HepG2 (cell line): ENCODE measurements at regions of chr6 and their contacts with region 1.

Region 1: GRCh38 chr6:18823782-18824386 is 436.7 kb downstream of the RNF144B start:
- DNase-seq: peak; percentile 33
- ATAC-seq: no peak
- H3K4me3 ChIP-seq: no peak overlapping the region
- H3K27ac ChIP-seq: no peak overlapping the region
- H3K4me1 ChIP-seq: no peaks in the 10 kb centered on the region
- H3K27me3 ChIP-seq: no peaks in the 10 kb centered on the region
- CTCF ChIP-seq: peak; percentile 62
- EP300 ChIP-seq: no peak
- POLR2A ChIP-seq: no peak
- RAD21 ChIP-seq: no peak

Region 2: GRCh38 chr6:18527836-18528743 is 295.8 kb before region 1 on chr6:
- CTCF ChIA-PET with region 1: no interaction called
- POLR2A ChIA-PET with region 1: no interaction called
- in situ Hi-C with region 1: no loop called
- intact Hi-C with region 1: loop called (anchors 10 kb)
- DNase-seq: no peak
- ATAC-seq: no peak
- H3K4me3 ChIP-seq: no peak overlapping the region
- H3K27ac ChIP-seq: no peak overlapping the region
- H3K4me1 ChIP-seq: no peaks in the 10 kb centered on the region
- H3K27me3 ChIP-seq: no peaks in the 10 kb centered on the region
- CTCF ChIP-seq: peak; percentile 3; the same call in 1 of the 2 replicates
- EP300 ChIP-seq: no peak
- POLR2A ChIP-seq: no peak
- RAD21 ChIP-seq: no peak